Activated naive CD4-positive, alpha-beta T cell treated with anti-CD3 and anti-CD28 coated beads for 36 hours (primary cell): ENCODE measurements at regions of chr5 and their contacts with region 1.

Region 1: DNA sequence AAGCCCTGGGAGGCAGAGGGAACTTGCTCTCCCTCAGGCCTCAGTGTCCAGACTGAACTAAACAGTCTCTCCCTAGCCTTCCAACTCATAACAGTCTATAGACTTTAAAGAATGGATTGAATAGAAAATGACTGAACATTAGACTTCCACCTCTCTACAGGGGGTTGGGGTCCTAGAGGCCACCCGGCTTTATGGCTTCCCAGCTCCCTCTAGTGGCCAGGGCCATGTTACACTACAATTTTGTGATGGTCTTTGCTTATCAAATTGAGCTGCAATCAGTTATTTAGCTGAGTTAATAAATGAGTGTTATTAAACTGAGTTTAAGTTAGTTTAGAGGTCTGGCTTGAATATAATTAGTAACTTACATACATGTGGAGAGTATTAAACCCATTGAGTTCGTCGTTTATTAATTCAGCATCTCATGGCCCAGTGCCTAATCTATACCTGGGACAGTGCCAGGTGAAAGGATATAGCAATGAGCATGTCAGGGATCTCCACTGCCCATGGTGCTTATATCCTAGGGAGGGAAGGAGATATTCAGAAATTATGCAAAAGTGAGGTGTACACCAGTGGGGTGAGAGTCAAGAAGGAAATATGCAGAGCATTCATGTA is 105.2 kb downstream of the SH3TC2 start:
- DNase-seq: peak; percentile 66
- H3K4me3 Mint-ChIP-seq: no peak overlapping the region
- H3K27ac Mint-ChIP-seq: no peak overlapping the region
- H3K4me1 Mint-ChIP-seq: no peaks in the 10 kb centered on the region
- H3K27me3 Mint-ChIP-seq: no peaks in the 10 kb centered on the region

Region 2: GRCh38 chr5:148740966-148741742 is 216.5 kb before region 1 on chr5:
- CTCF ChIA-PET with region 1: interaction called, 227 read pairs
- intact Hi-C with region 1: loop called (anchors 1 kb)
- DNase-seq: no peak
- H3K4me3 Mint-ChIP-seq: no peak overlapping the region
- H3K27ac Mint-ChIP-seq: no peak overlapping the region
- H3K4me1 Mint-ChIP-seq: no peaks in the 10 kb centered on the region
- H3K27me3 Mint-ChIP-seq: peaks cover 28% of the 10 kb centered on the region

Region 3: GRCh38 chr5:148826053-148826738 is 131.5 kb before region 1 on chr5 and contains the start of gene ADRB2:
- CTCF ChIA-PET with region 1: interaction called, 11 read pairs
- intact Hi-C with region 1: loop called (anchors 2 kb)
- DNase-seq: peak; percentile 90
- H3K4me3 Mint-ChIP-seq: peak within 1 kb of the TSS; percentile 78
- H3K27ac Mint-ChIP-seq: peak within 1 kb of the TSS; percentile 10
- H3K4me1 Mint-ChIP-seq: peaks cover 15% of the 10 kb centered on the region
- H3K27me3 Mint-ChIP-seq: peaks cover 23% of the 10 kb centered on the region
- total RNA-seq, gene ADRB2: 0.21 to 0.32 TPM

Region 4: GRCh38 chr5:148858106-148858505 is 99.6 kb before region 1 on chr5:
- CTCF ChIA-PET with region 1: no interaction called
- intact Hi-C with region 1: no loop called
- DNase-seq: no peak
- H3K4me3 Mint-ChIP-seq: no peak overlapping the region
- H3K27ac Mint-ChIP-seq: no peak overlapping the region
- H3K4me1 Mint-ChIP-seq: no peaks in the 10 kb centered on the region
- H3K27me3 Mint-ChIP-seq: no peaks in the 10 kb centered on the region

Region 5: DNA sequence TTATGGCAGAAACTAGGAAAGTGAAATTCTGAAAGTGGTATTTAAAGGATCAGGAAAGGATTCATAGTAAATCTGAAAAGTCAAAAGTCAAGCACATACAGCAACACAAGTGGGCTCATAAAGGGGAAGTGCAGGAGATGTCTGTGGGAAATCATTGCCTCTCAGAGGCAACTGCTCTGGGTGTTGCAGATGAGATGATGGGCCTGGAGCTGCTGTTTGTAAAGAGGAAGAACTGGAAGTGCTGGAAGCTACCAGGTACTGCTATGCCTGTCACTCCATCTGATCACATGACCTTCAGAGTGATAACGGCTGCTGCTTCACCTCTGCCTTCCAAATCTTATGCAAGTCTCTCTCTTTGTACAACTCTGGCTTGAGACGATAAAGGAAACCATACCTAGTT is 75.4 kb before region 1 on chr5:
- CTCF ChIA-PET with region 1: no interaction called
- intact Hi-C with region 1: no loop called
- DNase-seq: no peak
- H3K4me3 Mint-ChIP-seq: no peak overlapping the region
- H3K27ac Mint-ChIP-seq: no peak overlapping the region
- H3K4me1 Mint-ChIP-seq: peaks cover 1% of the 10 kb centered on the region
- H3K27me3 Mint-ChIP-seq: peaks cover 4% of the 10 kb centered on the region

Region 6: DNA sequence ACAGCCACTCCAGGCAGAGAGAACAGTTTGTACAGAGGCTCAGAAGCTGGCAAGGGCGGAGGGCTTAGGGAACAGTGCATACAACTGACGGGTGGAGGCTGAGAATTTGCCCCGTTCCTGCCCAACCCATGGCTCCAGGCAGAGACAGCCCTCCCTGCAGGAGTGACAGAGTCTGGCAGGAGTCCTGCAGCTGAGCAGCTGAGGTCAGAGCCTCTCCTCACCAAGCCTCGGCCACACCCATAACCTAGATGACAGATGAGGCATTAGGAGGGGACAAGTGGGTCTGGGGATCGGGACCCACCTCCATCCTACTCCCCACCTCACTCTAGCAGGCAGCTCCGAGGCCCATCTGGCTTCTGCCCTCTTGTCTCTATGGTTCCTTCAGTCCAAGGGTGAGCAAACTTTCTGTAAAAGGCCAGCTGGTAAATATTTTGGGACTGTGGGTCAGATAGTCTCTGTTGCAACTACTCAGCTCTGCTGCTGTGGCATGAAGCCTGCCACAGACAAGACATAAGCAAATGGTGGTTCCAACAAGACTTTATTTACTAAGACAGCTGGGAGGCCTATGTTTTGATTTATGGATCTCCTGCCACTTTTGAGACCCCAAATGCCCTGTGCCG is 21.5 kb after region 1 on chr5:
- CTCF ChIA-PET with region 1: interaction called, 13 read pairs
- intact Hi-C with region 1: no loop called
- DNase-seq: no peak
- H3K4me3 Mint-ChIP-seq: no peak overlapping the region
- H3K27ac Mint-ChIP-seq: no peak overlapping the region
- H3K4me1 Mint-ChIP-seq: no peaks in the 10 kb centered on the region
- H3K27me3 Mint-ChIP-seq: peaks cover 2% of the 10 kb centered on the region

Region 7: DNA sequence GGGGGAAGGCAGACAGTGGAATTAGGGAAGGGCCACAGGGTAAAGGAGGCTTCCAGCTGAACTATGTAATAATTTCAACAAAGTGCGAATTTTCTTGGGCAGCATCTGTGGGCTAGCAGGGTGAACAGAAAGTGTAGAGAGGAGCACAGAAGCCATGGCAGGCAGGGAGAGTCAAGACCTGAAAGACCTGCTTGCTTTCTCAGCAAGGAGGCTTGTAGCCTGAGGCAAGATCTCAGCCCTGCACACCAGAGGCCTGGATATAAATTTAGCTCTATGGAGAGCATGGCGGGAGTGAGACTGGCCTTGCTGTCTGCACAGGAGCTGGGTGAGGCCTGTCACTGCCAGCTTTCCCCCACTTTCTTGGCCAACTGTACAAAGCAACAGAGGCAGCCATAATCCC is 137.3 kb after region 1 on chr5:
- CTCF ChIA-PET with region 1: no interaction called
- intact Hi-C with region 1: no loop called
- DNase-seq: no peak
- H3K4me3 Mint-ChIP-seq: no peak overlapping the region
- H3K27ac Mint-ChIP-seq: no peak overlapping the region
- H3K4me1 Mint-ChIP-seq: no peaks in the 10 kb centered on the region
- H3K27me3 Mint-ChIP-seq: peaks cover 9% of the 10 kb centered on the region